Activated B cell treated with CpG ODN at 0.5 μM for 24 hours (primary cell): ENCODE measurements at regions of chr6 and their contacts with region 1.

Region 1: GRCh38 chr6:87203448-87204023 is 48.2 kb downstream of the ZNF292 start:
- DNase-seq: no peak
- ATAC-seq: no peak
- H3K4me3 Mint-ChIP-seq: no peak overlapping the region
- H3K27ac Mint-ChIP-seq: no peak overlapping the region
- H3K4me1 Mint-ChIP-seq: peaks cover 61% of the 10 kb centered on the region
- H3K27me3 Mint-ChIP-seq: no peaks in the 10 kb centered on the region
- CTCF ChIP-seq: no peak

Region 2: GRCh38 chr6:87182321-87182720 is 21.2 kb before region 1 on chr6:
- CTCF ChIA-PET with region 1: no interaction called
- POLR2A ChIA-PET with region 1: interaction called, 9 read pairs
- intact Hi-C with region 1: loop called (anchors 2 kb)
- DNase-seq: no peak
- ATAC-seq: peak; percentile 88
- H3K4me3 Mint-ChIP-seq: peak overlapping the region; percentile 67
- H3K27ac Mint-ChIP-seq: peak overlapping the region; percentile 86
- H3K4me1 Mint-ChIP-seq: peaks cover 67% of the 10 kb centered on the region
- H3K27me3 Mint-ChIP-seq: no peaks in the 10 kb centered on the region
- CTCF ChIP-seq: no peak